ENCODE measurements at regions of chr14 and their contacts with region 1.

Region 1: GRCh38 chr14:97707603-97708002 is 910.4 kb downstream of the VRK1 start:
- DNase-seq: peak; percentile 43
- ATAC-seq: peak; percentile 51
- H3K4me3 Mint-ChIP-seq: peak overlapping the region; percentile 85
- H3K27ac Mint-ChIP-seq: peak overlapping the region; percentile 97
- H3K4me1 Mint-ChIP-seq: peaks cover 83% of the 10 kb centered on the region
- H3K27me3 Mint-ChIP-seq: no peaks in the 10 kb centered on the region

Region 2: DNA sequence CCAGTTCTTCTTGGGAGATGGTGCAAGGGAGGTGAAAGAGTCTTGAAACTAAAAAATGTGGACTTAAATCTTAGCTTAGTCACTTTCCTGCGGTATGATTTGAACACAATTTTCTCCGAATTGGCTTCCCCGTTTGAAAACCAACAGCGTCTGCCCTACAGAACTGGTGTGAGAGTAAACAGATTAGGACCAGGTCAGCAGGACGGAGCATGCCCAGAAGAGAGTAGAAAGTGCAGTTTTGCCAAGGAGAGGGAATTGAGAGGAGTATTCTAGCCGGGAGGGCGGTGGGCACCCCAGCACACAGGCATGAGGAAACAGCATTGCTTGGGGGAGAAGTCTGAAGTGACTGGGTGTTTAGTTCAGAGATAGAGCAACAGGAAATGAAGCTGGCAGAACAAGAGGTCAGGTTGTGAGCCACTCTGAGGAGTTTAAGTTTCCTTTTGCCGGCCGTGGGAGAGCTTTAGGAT is 16.7 kb after region 1 on chr14:
- POLR2A ChIA-PET with region 1: interaction called, 15 read pairs
- DNase-seq: peak; percentile 58
- ATAC-seq: peak; percentile 96
- H3K4me3 Mint-ChIP-seq: peak overlapping the region; percentile 82
- H3K27ac Mint-ChIP-seq: peak overlapping the region; percentile 97
- H3K4me1 Mint-ChIP-seq: peaks cover 52% of the 10 kb centered on the region
- H3K27me3 Mint-ChIP-seq: no peaks in the 10 kb centered on the region

Measured in activated naive CD8-positive, alpha-beta T cell treated with anti-CD3 and anti-CD28 coated beads, Interleukin-2, amount 10 ng/mL, durations not matched to agents 7 days and 5 days (primary cell).